K562 (cell line): ENCODE measurements at regions of chr4 and their contacts with region 1.

Region 1: DNA sequence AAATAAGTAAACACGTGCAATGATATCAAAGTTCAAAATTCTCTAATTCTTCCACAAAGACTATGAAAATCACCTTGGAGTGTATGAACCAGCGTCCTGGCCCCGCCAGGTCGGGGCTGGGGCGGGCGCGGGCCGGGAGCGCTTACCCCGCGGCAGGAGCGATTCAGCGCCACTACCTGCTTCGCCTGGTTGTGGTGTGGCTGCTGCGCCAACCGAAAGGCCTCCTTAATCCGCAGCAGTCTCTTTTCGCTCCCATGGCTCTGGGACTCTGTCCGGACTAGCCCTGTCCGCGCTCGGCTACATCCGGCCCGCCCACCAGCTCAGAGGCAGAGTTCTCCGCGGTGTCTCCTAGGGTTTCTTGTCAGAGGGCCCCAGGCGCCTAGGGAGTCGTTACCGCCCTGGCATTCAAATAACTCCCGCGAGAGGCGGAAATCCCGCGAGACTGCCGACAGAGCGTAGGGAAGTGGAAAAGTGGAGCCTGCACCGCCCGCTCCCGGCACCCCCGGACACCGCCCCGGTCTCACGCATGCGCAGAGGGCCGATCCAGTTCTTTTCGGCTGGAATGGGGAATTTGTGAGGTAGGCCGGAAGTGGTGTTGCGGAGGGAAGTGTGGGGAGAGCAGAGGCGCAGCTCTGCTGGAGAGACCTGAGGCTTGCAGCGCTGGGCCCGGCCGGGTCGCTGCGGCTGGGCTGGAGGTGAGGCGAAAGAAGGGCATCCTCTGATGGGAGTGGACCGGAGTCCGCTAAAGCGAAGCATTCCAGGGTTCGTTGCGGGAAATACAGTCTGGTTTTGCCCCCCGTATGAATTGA is at the start of gene FAM200B:
- DNase-seq: peak; percentile 99
- ATAC-seq: peak; percentile 88
- H3K4me3 ChIP-seq: peak within 1 kb of the TSS; percentile 67
- H3K27ac ChIP-seq: peak within 1 kb of the TSS; percentile 87
- H3K4me1 ChIP-seq: peaks cover 4 to 16% of the 10 kb centered on the region in 2 experiments; a peak in 4 of 5 replicates
- H3K27me3 ChIP-seq: no peaks in the 10 kb centered on the region
- CTCF ChIP-seq: peak in 2 of 3 experiments; percentile 13 to 47; a peak in 3 of 6 replicates
- EP300 ChIP-seq: no peak; the same call in 1 of the 2 replicates
- POLR2A ChIP-seq: peak; percentile 93
- RAD21 ChIP-seq: peak in 1 of 2 experiments; percentile 2; a peak in 2 of 4 replicates
- polyA plus RNA-seq, gene FAM200B: 23.2 to 27.6 TPM

Region 2: DNA sequence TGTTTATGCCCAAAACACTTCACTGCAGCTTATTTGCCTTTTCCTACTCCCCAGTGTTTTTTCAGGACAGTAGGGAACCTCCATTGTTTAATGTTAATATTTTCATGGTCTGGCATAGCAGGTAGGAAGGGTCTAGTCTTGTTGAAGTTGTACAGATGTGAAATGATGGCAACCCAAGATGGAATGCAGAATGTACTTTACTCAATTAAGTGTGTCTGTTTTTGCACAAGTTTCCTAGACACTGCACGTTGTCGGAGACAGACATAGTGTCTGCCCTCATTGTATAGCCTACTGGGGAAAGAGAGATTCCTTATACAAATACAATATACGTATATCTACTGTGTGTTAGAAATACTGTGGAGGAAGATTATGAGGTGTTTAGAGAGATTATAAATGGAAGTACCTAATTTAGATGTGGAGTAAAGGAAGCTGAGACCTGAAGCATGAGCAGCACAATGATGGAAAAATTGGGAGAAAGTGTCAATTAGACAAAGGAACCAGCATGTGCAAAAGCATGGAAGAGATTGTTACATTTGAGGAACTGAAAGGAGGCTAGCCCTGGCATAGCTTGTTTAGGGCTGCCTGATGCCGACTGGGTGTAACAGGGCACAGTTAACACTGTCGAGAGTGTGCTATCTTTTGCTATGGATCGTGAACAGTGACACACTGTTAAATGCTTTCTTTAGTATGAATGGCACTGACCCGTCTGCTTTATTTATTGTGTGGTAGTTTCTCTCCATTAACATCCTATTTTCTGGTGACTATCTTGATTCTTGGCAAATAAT is 660.7 kb before region 1 on chr4:
- CTCF ChIA-PET with region 1: no interaction called
- POLR2A ChIA-PET with region 1: no interaction called
- in situ Hi-C with region 1: no loop called
- intact Hi-C with region 1: no loop called
- DNase-seq: no peak
- ATAC-seq: peak; percentile 43
- H3K4me3 ChIP-seq: no peak overlapping the region
- H3K27ac ChIP-seq: no peak overlapping the region
- H3K4me1 ChIP-seq: no peaks in the 10 kb centered on the region; a peak in 1 of 5 replicates
- H3K27me3 ChIP-seq: no peaks in the 10 kb centered on the region
- CTCF ChIP-seq: no peak
- EP300 ChIP-seq: no peak
- POLR2A ChIP-seq: no peak
- RAD21 ChIP-seq: no peak

Region 3: GRCh38 chr4:15655229-15656037 is 26.0 kb before region 1 on chr4 and contains the start of gene FBXL5:
- CTCF ChIA-PET with region 1: no interaction called
- POLR2A ChIA-PET with region 1: interaction called, 9 read pairs
- in situ Hi-C with region 1: no loop called
- intact Hi-C with region 1: loop called (anchors 1 kb)
- DNase-seq: peak; percentile 88 to 97 (median 96)
- ATAC-seq: peak; percentile 49
- H3K4me3 ChIP-seq: peak within 1 kb of the TSS; percentile 84
- H3K27ac ChIP-seq: peak within 1 kb of the TSS; percentile 98
- H3K4me1 ChIP-seq: peaks cover 13 to 16% of the 10 kb centered on the region in 2 experiments
- H3K27me3 ChIP-seq: no peaks in the 10 kb centered on the region
- CTCF ChIP-seq: no peak
- EP300 ChIP-seq: no peak
- POLR2A ChIP-seq: peak; percentile 78
- RAD21 ChIP-seq: no peak
- polyA plus RNA-seq, gene FBXL5: 6.0 to 10.8 TPM

Region 4: DNA sequence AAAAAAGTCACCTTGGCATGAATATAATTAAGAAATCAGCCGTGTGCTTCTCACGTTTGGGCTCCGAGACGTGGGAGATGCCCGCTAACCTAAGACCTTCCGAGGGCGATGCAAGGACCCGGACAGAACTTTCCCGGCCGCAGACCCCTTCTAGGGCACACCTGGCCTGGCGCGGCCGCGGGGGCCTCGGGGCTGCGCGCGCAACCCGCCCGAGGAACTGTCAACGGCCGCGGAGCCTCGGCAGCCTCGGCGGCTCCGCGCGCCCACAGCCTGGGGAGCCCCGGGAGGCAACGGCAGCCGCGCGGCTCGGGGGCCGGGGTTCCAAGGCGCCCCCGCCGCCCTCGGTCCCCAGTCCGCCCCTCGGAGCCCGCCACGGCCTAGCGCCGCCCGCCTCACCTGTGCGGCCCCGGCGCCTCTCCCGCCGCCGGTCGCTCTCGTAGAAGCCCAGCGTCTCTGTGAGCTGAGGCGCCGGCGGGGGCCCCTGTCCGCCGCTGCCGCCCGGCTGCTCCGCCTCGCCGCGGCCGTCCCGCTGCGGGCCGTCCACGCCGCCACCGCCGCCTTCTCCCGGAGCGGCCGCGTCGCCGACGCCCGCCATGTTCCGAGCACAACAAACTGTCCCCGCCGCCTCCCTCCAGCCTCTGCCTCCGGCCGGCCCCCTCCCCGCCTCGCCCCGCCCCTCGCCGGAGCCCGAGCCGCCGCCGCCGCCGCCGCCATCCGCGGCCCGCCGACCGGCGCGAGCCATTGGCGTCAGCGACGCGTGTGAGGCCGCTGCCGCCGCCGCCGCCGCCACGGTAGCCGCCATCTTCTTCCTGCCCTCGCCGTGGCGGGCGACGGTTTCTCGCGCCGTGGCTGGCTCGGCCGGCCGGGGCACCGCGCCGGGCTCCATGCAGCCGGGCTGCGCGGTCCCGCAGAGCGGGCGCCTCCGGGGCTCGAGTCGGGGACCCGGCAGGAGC is 544.7 kb after region 1 on chr4 and contains the start of gene TAPT1:
- CTCF ChIA-PET with region 1: no interaction called
- POLR2A ChIA-PET with region 1: no interaction called
- in situ Hi-C with region 1: no loop called
- intact Hi-C with region 1: loop called (anchors 10 kb)
- DNase-seq: peak; percentile 80 to 84 (median 82)
- ATAC-seq: peak; percentile 57
- H3K4me3 ChIP-seq: peak within 1 kb of the TSS; percentile 81
- H3K27ac ChIP-seq: peak within 1 kb of the TSS; percentile 91
- H3K4me1 ChIP-seq: peaks cover 6 to 12% of the 10 kb centered on the region in 2 experiments; a peak in 4 of 5 replicates
- H3K27me3 ChIP-seq: no peaks in the 10 kb centered on the region
- CTCF ChIP-seq: no peak
- EP300 ChIP-seq: no peak
- POLR2A ChIP-seq: no peak
- RAD21 ChIP-seq: no peak
- polyA plus RNA-seq, gene TAPT1: 1.6 to 2.7 TPM